CD8-positive, alpha-beta T cell (primary cell): ENCODE measurements at regions of chr17 and their contacts with region 1.

Region 1: DNA sequence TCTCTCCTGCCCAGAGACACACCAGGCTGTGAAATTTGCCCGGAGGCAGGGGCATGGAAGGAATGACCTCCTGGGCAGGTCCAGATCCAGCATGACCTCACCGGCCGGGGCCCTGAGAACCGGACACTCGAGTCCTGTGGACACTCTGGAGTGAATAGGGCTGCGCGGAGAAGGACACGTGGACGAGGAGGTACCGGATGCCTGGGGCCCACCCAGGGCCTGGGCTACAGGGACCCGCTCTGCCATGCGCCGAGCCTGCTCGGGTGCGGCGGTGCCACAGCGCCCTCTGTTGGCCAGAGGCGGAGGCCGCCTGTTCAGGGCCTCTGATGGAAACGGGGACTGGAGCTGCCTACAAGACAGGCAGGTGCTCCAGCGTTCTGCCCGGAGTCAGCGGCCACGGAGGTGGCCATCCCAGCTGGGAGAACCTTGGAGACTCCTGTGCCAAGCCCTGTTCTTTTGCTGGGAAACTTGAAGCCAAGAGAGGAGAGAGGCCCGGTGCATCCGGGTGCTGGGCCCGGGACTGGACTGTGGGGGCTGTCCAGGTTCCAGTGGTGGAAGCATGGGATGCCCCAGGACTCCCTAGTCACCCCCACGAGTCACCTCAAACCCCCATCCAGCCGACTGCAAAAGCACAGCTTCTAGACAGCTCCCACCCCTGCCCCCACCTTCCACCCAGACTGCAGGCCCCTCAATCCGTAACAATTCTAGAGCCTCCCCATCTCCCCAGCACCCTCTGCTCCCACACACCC is 19.3 kb upstream of the NXPH3 start:
- DNase-seq: peak; percentile 68 to 89 (median 81)
- ATAC-seq: peak; percentile 99
- H3K4me3 ChIP-seq: no peak overlapping the region
- H3K4me3 Mint-ChIP-seq: no peak overlapping the region
- H3K27ac ChIP-seq: no peak overlapping the region
- H3K27ac Mint-ChIP-seq: no peak overlapping the region
- H3K4me1 ChIP-seq: peaks cover 7% of the 10 kb centered on the region
- H3K4me1 Mint-ChIP-seq: peaks cover 5% of the 10 kb centered on the region
- H3K27me3 ChIP-seq: no peaks in the 10 kb centered on the region
- H3K27me3 Mint-ChIP-seq: peaks cover 3% of the 10 kb centered on the region
- CTCF ChIP-seq: peak; percentile 92

Region 2: DNA sequence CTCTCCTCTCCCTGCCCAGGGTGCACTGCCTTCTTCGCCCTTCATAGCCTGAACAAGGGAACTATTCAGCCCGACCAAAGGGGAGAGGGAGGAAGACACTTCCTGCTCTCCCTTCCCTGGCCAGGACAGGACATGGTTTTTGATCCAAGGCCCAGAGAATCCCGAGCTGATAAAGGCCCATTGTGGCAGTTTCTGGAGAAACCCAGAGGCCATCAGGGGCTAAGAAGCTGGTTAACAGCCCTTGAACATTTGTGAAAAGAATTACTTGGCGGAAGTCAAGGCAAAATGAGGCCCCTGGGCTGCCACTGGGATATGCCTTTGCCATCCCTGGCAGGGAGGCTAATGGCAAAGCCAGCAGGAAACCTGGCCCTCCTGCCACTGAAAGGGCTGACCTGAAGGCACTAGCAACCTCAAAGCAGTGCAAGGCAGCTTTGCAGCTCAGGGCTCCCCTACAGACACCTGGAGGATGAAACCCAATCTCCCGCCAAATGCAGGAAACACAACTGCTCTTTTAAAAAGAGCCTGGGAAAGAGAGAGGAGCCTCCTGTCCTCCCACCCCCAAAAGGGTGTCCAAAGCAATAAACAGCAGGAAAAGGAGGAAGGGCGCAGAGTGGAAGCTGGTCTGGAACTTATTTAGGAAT is 154.3 kb before region 1 on chr17:
- CTCF ChIA-PET with region 1: interaction called, 131 read pairs
- POLR2A ChIA-PET with region 1: no interaction called
- intact Hi-C with region 1: no loop called
- DNase-seq: no peak
- ATAC-seq: no peak
- H3K4me3 ChIP-seq: no peak overlapping the region
- H3K4me3 Mint-ChIP-seq: no peak overlapping the region
- H3K27ac ChIP-seq: peak overlapping the region in 1 of 2 experiments; percentile 81
- H3K27ac Mint-ChIP-seq: no peak overlapping the region
- H3K4me1 ChIP-seq: peaks cover 22% of the 10 kb centered on the region
- H3K4me1 Mint-ChIP-seq: peaks cover 24% of the 10 kb centered on the region
- H3K27me3 ChIP-seq: no peaks in the 10 kb centered on the region
- H3K27me3 Mint-ChIP-seq: no peaks in the 10 kb centered on the region
- CTCF ChIP-seq: no peak

Region 3: GRCh38 chr17:49434821-49435670 is 121.4 kb before region 1 on chr17:
- CTCF ChIA-PET with region 1: interaction called, 61 read pairs
- POLR2A ChIA-PET with region 1: no interaction called
- intact Hi-C with region 1: loop called in 1 of 2 experiments (anchors 1 kb)
- DNase-seq: peak in 7 of 9 experiments; percentile 9 to 68 (median 32)
- ATAC-seq: no peak
- H3K4me3 ChIP-seq: no peak overlapping the region
- H3K4me3 Mint-ChIP-seq: no peak overlapping the region
- H3K27ac ChIP-seq: no peak overlapping the region
- H3K27ac Mint-ChIP-seq: no peak overlapping the region
- H3K4me1 ChIP-seq: no peaks in the 10 kb centered on the region
- H3K4me1 Mint-ChIP-seq: peaks cover 2% of the 10 kb centered on the region
- H3K27me3 ChIP-seq: peaks cover 0 to 6% of the 10 kb centered on the region in 2 experiments
- H3K27me3 Mint-ChIP-seq: peaks cover 27% of the 10 kb centered on the region
- CTCF ChIP-seq: peak; percentile 74

Region 4: DNA sequence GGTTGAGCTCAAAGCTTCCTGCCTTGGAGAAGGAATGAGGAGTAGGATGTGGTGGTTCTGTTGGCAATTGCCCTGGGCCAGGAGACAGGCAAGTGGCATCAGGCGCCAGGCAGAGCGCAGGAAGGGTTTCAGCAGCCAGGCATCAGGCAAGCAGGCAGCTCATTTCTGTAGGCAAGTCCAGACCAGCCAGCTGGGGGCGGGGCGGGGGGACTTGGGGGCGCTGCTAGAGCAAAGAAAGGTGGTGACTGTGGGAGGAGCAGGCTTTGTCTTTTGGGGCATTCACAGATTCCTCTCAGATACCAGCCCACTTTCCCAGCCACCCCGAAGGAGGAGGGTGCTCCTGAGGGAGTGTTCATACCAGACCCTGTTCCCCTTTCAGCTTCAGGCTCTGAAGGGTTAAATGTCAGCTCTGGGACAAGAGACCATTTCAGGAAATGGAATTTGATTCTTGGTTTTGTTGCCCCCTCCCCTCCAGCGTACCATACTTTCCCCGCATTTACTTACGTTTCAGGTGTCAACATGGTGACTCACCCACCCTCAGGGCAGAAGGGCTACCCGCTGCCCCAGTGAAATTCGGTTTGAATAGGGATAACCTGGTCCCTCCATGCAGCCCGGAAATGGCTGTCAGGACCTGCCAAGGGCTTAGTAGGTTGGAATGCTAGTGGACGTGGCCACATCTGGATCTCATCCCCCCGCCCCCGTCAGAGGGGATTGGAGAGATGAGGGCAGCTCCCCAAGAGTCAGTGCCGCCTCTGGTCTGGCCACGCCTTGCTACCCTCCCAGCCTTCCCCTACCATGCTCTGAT is 48.1 kb before region 1 on chr17:
- CTCF ChIA-PET with region 1: interaction called, 11 read pairs
- POLR2A ChIA-PET with region 1: no interaction called
- intact Hi-C with region 1: no loop called
- DNase-seq: no peak
- ATAC-seq: no peak
- H3K4me3 ChIP-seq: no peak overlapping the region
- H3K4me3 Mint-ChIP-seq: no peak overlapping the region
- H3K27ac ChIP-seq: no peak overlapping the region
- H3K27ac Mint-ChIP-seq: no peak overlapping the region
- H3K4me1 ChIP-seq: no peaks in the 10 kb centered on the region
- H3K4me1 Mint-ChIP-seq: no peaks in the 10 kb centered on the region
- H3K27me3 ChIP-seq: peaks cover under 1 to 9% of the 10 kb centered on the region in 2 experiments
- H3K27me3 Mint-ChIP-seq: peaks cover 39% of the 10 kb centered on the region
- CTCF ChIP-seq: no peak

Region 5: GRCh38 chr17:49597928-49598655 is 41.7 kb after region 1 on chr17:
- CTCF ChIA-PET with region 1: interaction called, 10 read pairs
- POLR2A ChIA-PET with region 1: no interaction called
- intact Hi-C with region 1: no loop called
- DNase-seq: no peak
- ATAC-seq: no peak
- H3K4me3 ChIP-seq: no peak overlapping the region
- H3K4me3 Mint-ChIP-seq: no peak overlapping the region
- H3K27ac ChIP-seq: no peak overlapping the region
- H3K27ac Mint-ChIP-seq: no peak overlapping the region
- H3K4me1 ChIP-seq: no peaks in the 10 kb centered on the region
- H3K4me1 Mint-ChIP-seq: no peaks in the 10 kb centered on the region
- H3K27me3 ChIP-seq: no peaks in the 10 kb centered on the region
- H3K27me3 Mint-ChIP-seq: no peaks in the 10 kb centered on the region
- CTCF ChIP-seq: no peak